CD4-positive, alpha-beta T cell (primary cell): ENCODE measurements at regions of chr5 and their contacts with region 1.

Region 1: DNA sequence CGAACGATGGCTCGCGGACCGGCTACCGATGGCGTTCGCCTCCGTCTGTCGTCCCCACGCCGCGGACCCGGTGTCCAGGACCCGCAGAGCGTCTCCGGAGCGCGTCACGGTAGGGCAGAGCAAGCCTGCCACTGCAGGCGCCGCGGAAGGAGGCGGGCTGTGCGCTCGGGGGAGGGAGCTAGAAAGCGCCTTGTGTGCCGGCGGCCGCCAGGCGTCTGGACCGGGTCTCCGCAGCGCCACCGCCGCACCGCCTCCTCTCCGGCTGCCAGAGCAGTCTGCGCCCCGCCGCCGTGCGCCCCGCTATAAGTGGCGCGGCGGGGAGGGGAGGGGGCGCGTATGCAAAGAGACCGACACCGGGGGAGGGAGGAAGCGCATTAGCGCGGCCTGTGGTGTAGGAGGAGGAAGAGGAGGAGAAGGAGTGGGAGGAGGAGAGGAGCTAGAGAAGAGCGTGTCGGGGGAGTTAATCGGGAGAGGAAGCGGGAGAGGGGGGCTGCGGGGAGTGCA is at the start of gene ENC1:
- DNase-seq: peak; percentile 50 to 88 (median 70)
- ATAC-seq: peak; percentile 81
- H3K4me3 ChIP-seq: peak within 1 kb of the TSS; percentile 83
- H3K4me3 Mint-ChIP-seq: peak within 1 kb of the TSS; percentile 84
- H3K27ac ChIP-seq: peak within 1 kb of the TSS in 1 of 2 donors; percentile 31
- H3K27ac Mint-ChIP-seq: peak within 1 kb of the TSS; percentile 75
- H3K4me1 ChIP-seq: peaks cover 32% of the 10 kb centered on the region
- H3K4me1 Mint-ChIP-seq: peaks cover 37% of the 10 kb centered on the region
- H3K27me3 ChIP-seq: peaks cover 0 to 6% of the 10 kb centered on the region in 2 experiments
- H3K27me3 Mint-ChIP-seq: peaks cover 5% of the 10 kb centered on the region
- CTCF ChIP-seq: peak; percentile 20
- total RNA-seq, gene ENC1: 39.6 to 40.1 TPM

Region 2: GRCh38 chr5:74056789-74057164 is 583.7 kb before region 1 on chr5:
- CTCF ChIA-PET with region 1: no interaction called
- POLR2A ChIA-PET with region 1: no interaction called
- intact Hi-C with region 1: loop called in 1 of 2 experiments (anchors 5 kb)
- DNase-seq: peak in 2 of 14 experiments; percentile 3 to 8
- ATAC-seq: no peak
- H3K4me3 ChIP-seq: no peak overlapping the region
- H3K4me3 Mint-ChIP-seq: no peak overlapping the region
- H3K27ac ChIP-seq: no peak overlapping the region
- H3K27ac Mint-ChIP-seq: no peak overlapping the region
- H3K4me1 ChIP-seq: no peaks in the 10 kb centered on the region
- H3K4me1 Mint-ChIP-seq: no peaks in the 10 kb centered on the region
- H3K27me3 ChIP-seq: peaks cover 4 to 20% of the 10 kb centered on the region in 2 experiments
- H3K27me3 Mint-ChIP-seq: peaks cover 19% of the 10 kb centered on the region
- CTCF ChIP-seq: no peak

Region 3: GRCh38 chr5:74294231-74294705 is 346.2 kb before region 1 on chr5:
- CTCF ChIA-PET with region 1: no interaction called
- POLR2A ChIA-PET with region 1: no interaction called
- intact Hi-C with region 1: loop called in 1 of 2 experiments (anchors 10 kb)
- DNase-seq: peak in 2 of 14 experiments; percentile 34 to 53
- ATAC-seq: no peak
- H3K4me3 ChIP-seq: no peak overlapping the region
- H3K4me3 Mint-ChIP-seq: no peak overlapping the region
- H3K27ac ChIP-seq: no peak overlapping the region
- H3K27ac Mint-ChIP-seq: no peak overlapping the region
- H3K4me1 ChIP-seq: no peaks in the 10 kb centered on the region
- H3K4me1 Mint-ChIP-seq: no peaks in the 10 kb centered on the region
- H3K27me3 ChIP-seq: peaks cover 0 to 4% of the 10 kb centered on the region in 2 experiments
- H3K27me3 Mint-ChIP-seq: peaks cover 8% of the 10 kb centered on the region
- CTCF ChIP-seq: no peak

Region 4: DNA sequence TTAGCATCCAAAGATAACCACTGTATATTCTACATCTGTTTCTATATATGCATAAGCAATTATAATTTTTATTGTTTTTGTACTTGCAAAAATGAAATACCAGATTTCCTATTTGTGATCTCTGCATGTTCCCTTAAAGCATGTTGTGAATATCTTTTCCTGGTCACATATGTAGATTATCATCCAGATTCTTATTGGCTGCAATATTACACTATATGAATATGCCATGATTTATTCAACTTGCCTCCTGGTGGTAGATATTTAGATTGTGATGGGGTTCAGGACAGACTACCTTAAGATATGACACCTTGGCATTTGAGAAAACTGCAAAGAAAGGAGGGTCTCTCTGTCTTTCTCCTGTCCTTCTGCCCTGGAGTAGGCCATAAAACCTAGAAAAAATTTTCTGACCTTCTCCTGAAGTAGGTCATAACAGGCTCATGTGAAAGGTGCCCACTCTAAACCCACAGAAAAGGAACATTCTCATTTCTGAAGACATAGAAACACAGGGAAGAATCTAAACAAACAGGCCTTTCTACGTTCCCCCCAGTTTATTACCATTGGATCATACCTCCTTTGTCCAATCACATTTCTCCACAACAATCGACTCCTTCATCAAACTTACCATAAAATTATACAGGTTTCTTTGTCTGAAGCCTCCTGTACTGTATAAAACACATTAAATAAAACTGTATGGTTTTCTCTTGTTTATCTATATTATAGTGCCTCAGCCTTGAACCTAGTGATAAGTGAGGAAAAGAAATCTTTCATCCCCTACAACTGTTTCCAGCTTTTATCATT is 340.9 kb before region 1 on chr5:
- CTCF ChIA-PET with region 1: no interaction called
- POLR2A ChIA-PET with region 1: no interaction called
- intact Hi-C with region 1: loop called (anchors 10 kb)
- DNase-seq: no peak
- ATAC-seq: no peak
- H3K4me3 ChIP-seq: no peak overlapping the region
- H3K4me3 Mint-ChIP-seq: no peak overlapping the region
- H3K27ac ChIP-seq: no peak overlapping the region
- H3K27ac Mint-ChIP-seq: no peak overlapping the region
- H3K4me1 ChIP-seq: no peaks in the 10 kb centered on the region
- H3K4me1 Mint-ChIP-seq: no peaks in the 10 kb centered on the region
- H3K27me3 ChIP-seq: no peaks in the 10 kb centered on the region
- H3K27me3 Mint-ChIP-seq: peaks cover 13% of the 10 kb centered on the region
- CTCF ChIP-seq: no peak

Region 5: GRCh38 chr5:74394916-74395781 is 245.4 kb before region 1 on chr5:
- CTCF ChIA-PET with region 1: no interaction called
- POLR2A ChIA-PET with region 1: no interaction called
- intact Hi-C with region 1: loop called (anchors 2 to 5 kb)
- DNase-seq: peak in 1 of 14 experiments; percentile 6
- ATAC-seq: no peak
- H3K4me3 ChIP-seq: no peak overlapping the region
- H3K4me3 Mint-ChIP-seq: no peak overlapping the region
- H3K27ac ChIP-seq: no peak overlapping the region
- H3K27ac Mint-ChIP-seq: no peak overlapping the region
- H3K4me1 ChIP-seq: no peaks in the 10 kb centered on the region
- H3K4me1 Mint-ChIP-seq: no peaks in the 10 kb centered on the region
- H3K27me3 ChIP-seq: no peaks in the 10 kb centered on the region
- H3K27me3 Mint-ChIP-seq: no peaks in the 10 kb centered on the region
- CTCF ChIP-seq: peak; percentile 15

Region 6: GRCh38 chr5:74579215-74579614 is 61.3 kb before region 1 on chr5:
- CTCF ChIA-PET with region 1: no interaction called
- POLR2A ChIA-PET with region 1: interaction called, 10 read pairs
- intact Hi-C with region 1: loop called in 1 of 2 experiments (anchors 2 kb)
- DNase-seq: peak; percentile 9 to 83 (median 36)
- ATAC-seq: peak; percentile 86
- H3K4me3 ChIP-seq: no peak overlapping the region
- H3K4me3 Mint-ChIP-seq: peak overlapping the region; percentile 70
- H3K27ac ChIP-seq: peak overlapping the region in 1 of 2 donors; percentile 5
- H3K27ac Mint-ChIP-seq: peak overlapping the region; percentile 81
- H3K4me1 ChIP-seq: peaks cover 31% of the 10 kb centered on the region
- H3K4me1 Mint-ChIP-seq: peaks cover 45% of the 10 kb centered on the region
- H3K27me3 ChIP-seq: no peaks in the 10 kb centered on the region
- H3K27me3 Mint-ChIP-seq: no peaks in the 10 kb centered on the region
- CTCF ChIP-seq: no peak